HCT116 (cell line): ENCODE measurements at regions of chr14 and their contacts with region 1.

Region 1: DNA sequence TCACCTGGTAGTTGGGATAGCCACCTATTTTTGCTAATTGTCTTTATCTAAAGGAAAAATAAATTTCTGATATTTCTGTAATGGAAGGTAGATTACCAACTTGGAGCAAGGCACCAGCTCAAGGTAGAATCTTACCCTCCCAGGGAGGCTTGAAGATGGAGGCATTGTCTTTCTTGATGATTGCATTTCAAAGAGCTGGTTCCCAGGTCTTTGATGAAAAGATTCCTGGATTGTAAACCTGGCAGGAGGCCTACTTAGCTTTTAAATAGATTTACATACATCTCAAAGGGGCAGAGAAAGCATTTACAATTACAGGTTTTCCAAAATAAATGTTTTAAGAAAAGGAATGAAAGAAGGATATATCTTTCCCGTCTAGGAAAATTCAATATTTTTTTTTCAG is 729.2 kb downstream of the LRFN5 start:
- DNase-seq: no peak
- ATAC-seq: no peak
- H3K4me3 ChIP-seq: no peak overlapping the region
- H3K27ac ChIP-seq: no peak overlapping the region
- H3K4me1 ChIP-seq: no peaks in the 10 kb centered on the region
- H3K27me3 ChIP-seq: no peaks in the 10 kb centered on the region
- CTCF ChIP-seq: no peak
- POLR2A ChIP-seq: no peak
- RAD21 ChIP-seq: no peak

Region 2: GRCh38 chr14:42185718-42186117 is 150.2 kb before region 1 on chr14:
- CTCF ChIA-PET with region 1: no interaction called
- POLR2A ChIA-PET with region 1: no interaction called
- RAD21 ChIA-PET with region 1: no interaction called
- intact Hi-C with region 1: no loop called
- DNase-seq: no peak
- ATAC-seq: no peak
- H3K4me3 ChIP-seq: no peak overlapping the region
- H3K27ac ChIP-seq: no peak overlapping the region
- H3K4me1 ChIP-seq: no peaks in the 10 kb centered on the region
- H3K27me3 ChIP-seq: no peaks in the 10 kb centered on the region
- CTCF ChIP-seq: no peak
- POLR2A ChIP-seq: no peak
- RAD21 ChIP-seq: no peak

Region 3: GRCh38 chr14:42299692-42300091 is 36.2 kb before region 1 on chr14:
- CTCF ChIA-PET with region 1: no interaction called
- POLR2A ChIA-PET with region 1: no interaction called
- RAD21 ChIA-PET with region 1: no interaction called
- intact Hi-C with region 1: no loop called
- DNase-seq: no peak
- ATAC-seq: no peak
- H3K4me3 ChIP-seq: no peak overlapping the region
- H3K27ac ChIP-seq: no peak overlapping the region
- H3K4me1 ChIP-seq: no peaks in the 10 kb centered on the region
- H3K27me3 ChIP-seq: no peaks in the 10 kb centered on the region
- CTCF ChIP-seq: no peak
- POLR2A ChIP-seq: no peak
- RAD21 ChIP-seq: no peak

Region 4: DNA sequence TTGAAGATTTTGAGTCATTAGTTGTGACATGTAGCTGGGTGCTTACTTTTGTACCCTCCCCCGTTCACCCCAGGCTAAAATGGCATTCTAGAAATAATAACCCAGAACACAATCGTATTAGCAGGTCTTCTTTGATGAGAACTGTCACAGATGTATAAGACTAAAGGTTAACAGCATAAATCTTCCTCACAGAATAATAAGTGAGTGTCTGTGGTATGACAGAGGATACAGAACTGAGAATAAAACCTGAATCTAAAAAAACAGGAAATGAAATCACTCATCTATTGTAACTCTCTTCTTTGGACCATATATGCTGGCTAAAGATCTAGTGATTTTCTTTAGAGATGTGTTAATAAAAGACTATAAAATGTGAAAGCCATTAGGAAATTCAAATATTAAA is 17.4 kb after region 1 on chr14:
- CTCF ChIA-PET with region 1: no interaction called
- POLR2A ChIA-PET with region 1: no interaction called
- RAD21 ChIA-PET with region 1: no interaction called
- intact Hi-C with region 1: loop called (anchors 1 kb)
- DNase-seq: no peak
- ATAC-seq: no peak
- H3K4me3 ChIP-seq: no peak overlapping the region
- H3K27ac ChIP-seq: no peak overlapping the region
- H3K4me1 ChIP-seq: no peaks in the 10 kb centered on the region
- H3K27me3 ChIP-seq: no peaks in the 10 kb centered on the region
- CTCF ChIP-seq: no peak
- POLR2A ChIP-seq: no peak
- RAD21 ChIP-seq: no peak